ENCODE measurements at regions of chr11 and their contacts with region 1.

Region 1: GRCh38 chr11:2428322-2428795 is 16.0 kb downstream of the TRPM5 start:
- DNase-seq: peak; percentile 88
- H3K4me3 ChIP-seq: no peak overlapping the region
- H3K27ac ChIP-seq: no peak overlapping the region
- H3K4me1 ChIP-seq: peaks cover 0 to 5% (median 3%) of the 10 kb centered on the region in 4 donors
- H3K27me3 ChIP-seq: peaks cover 27% of the 10 kb centered on the region
- CTCF ChIP-seq: peak; percentile 81 to 99 (median 89)
- EP300 ChIP-seq: no peak
- POLR2A ChIP-seq: no peak

Region 2: DNA sequence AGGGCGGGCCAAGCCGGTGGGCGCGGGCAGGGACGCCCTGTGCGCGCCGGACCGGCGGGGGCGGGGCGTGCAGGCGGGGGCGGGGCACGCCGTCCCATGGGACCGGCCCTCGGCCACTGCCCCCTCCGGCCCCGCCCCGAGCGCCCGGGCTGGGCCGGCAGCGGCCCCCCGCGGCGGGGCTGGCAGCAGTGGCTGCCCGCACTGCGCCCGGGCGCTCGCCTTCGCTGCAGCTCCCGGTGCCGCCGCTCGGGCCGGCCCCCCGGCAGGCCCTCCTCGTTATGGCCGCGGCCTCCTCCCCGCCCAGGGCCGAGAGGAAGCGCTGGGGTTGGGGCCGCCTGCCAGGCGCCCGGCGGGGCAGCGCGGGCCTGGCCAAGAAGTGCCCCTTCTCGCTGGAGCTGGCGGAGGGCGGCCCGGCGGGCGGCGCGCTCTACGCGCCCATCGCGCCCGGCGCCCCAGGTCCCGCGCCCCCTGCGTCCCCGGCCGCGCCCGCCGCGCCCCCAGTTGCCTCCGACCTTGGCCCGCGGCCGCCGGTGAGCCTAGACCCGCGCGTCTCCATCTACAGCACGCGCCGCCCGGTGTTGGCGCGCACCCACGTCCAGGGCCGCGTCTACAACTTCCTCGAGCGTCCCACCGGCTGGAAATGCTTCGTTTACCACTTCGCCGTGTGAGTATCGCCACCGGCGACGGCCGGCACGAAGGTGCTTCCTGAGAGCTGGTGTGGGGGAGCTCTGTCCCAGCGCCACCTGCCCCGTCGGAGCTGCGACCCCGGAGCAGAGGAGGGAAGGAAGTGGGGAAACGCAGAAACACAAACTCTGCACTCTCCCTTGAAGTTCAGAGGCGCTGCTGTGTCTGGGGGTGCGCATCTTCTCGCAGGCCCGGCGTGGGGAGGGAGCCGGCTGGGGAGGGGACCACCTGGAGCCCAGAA is 16.7 kb after region 1 on chr11 and contains the start of gene KCNQ1:
- in situ Hi-C with region 1: no loop called
- intact Hi-C with region 1: no loop called
- DNase-seq: peak; percentile 87
- H3K4me3 ChIP-seq: peak within 1 kb of the TSS; percentile 13 to 53 (median 42)
- H3K27ac ChIP-seq: peak within 1 kb of the TSS; percentile 48 to 84 (median 65)
- H3K4me1 ChIP-seq: peaks cover 3 to 54% (median 44%) of the 10 kb centered on the region in 4 donors
- H3K27me3 ChIP-seq: peaks cover 16% of the 10 kb centered on the region
- CTCF ChIP-seq: no peak
- EP300 ChIP-seq: no peak
- POLR2A ChIP-seq: no peak
- total RNA-seq, gene KCNQ1: 5.6 to 46.8 (median 24.6) TPM

Region 3: GRCh38 chr11:2526808-2527381 is 98.5 kb after region 1 on chr11:
- in situ Hi-C with region 1: loop called (anchors 5 to 10 kb)
- intact Hi-C with region 1: loop called (anchors 5 kb)
- DNase-seq: peak; percentile 87
- H3K4me3 ChIP-seq: peak overlapping the region in 2 of 4 donors; percentile 9 to 33
- H3K27ac ChIP-seq: peak overlapping the region; percentile 74 to 80 (median 77)
- H3K4me1 ChIP-seq: peaks cover 11 to 26% (median 23%) of the 10 kb centered on the region in 4 donors
- H3K27me3 ChIP-seq: no peaks in the 10 kb centered on the region
- CTCF ChIP-seq: peak; percentile 20 to 72 (median 31)
- EP300 ChIP-seq: no peak
- POLR2A ChIP-seq: no peak

Region 4: DNA sequence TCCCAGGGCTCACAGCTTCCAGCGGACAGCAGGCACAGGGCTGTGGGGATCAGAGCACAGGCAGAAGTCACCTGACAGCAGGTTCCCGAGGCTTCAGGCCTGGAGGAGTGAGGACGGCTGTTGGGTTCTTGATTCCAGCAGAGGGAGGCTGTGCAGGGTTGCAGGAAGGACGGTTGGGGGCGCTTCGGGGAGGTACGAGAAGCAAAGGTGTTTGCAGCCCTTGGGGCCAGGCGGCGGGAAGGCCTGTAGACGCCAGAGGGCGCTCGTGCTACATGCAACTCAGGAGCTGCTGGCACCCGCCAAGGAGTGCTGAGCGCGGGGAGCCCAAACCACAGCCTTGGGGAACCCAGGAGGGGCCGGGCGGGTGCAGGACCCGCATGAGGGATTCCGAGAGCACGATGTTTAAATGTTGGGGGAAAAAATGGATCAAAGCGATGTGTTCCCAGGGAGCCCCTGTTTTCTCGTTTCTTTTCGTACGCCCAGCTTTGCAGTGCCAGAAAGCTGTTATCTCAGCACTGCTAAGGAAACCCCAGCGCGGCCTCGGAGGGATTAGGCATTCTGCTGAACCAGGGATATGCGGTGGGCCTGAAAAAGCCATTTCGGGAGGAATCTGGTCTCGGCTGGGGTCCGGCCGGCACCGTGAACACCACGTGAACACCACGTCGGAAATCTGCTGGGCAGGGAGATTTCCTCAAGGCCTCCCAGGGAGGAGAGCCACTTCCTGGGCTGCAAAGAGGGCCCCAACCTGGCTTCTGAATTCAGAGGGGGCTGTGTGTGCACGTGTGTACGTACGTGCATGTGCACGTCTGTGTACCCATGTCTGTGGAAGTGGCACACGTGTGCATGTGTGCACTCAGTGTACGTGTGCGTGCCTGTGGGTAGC is 104.6 kb after region 1 on chr11:
- in situ Hi-C with region 1: loop called (anchors 5 to 10 kb)
- intact Hi-C with region 1: loop called (anchors 5 kb)
- DNase-seq: peak; percentile 93
- H3K4me3 ChIP-seq: peak overlapping the region in 2 of 4 donors; percentile 9 to 12
- H3K27ac ChIP-seq: peak overlapping the region in 2 of 4 donors; percentile 8 to 37
- H3K4me1 ChIP-seq: peaks cover 5 to 22% (median 7%) of the 10 kb centered on the region in 4 donors
- H3K27me3 ChIP-seq: no peaks in the 10 kb centered on the region
- CTCF ChIP-seq: peak; percentile 99
- EP300 ChIP-seq: no peak
- POLR2A ChIP-seq: no peak

Region 5: GRCh38 chr11:2892215-2893020 is 464.1 kb after region 1 on chr11:
- in situ Hi-C with region 1: loop called (anchors 5 to 25 kb)
- intact Hi-C with region 1: loop called (anchors 10 kb)
- DNase-seq: peak; percentile 67
- H3K4me3 ChIP-seq: peak overlapping the region; percentile 11 to 45 (median 24)
- H3K27ac ChIP-seq: peak overlapping the region; percentile 18 to 59 (median 57)
- H3K4me1 ChIP-seq: peaks cover 21 to 32% (median 28%) of the 10 kb centered on the region in 4 donors
- H3K27me3 ChIP-seq: no peaks in the 10 kb centered on the region
- CTCF ChIP-seq: peak; percentile 85 to 96 (median 96)
- EP300 ChIP-seq: no peak
- POLR2A ChIP-seq: peak; percentile 14

Region 6: GRCh38 chr11:2898366-2899079 is 470.2 kb after region 1 on chr11:
- in situ Hi-C with region 1: loop called (anchors 5 to 25 kb)
- intact Hi-C with region 1: loop called (anchors 10 kb)
- DNase-seq: peak; percentile 63
- H3K4me3 ChIP-seq: no peak overlapping the region
- H3K27ac ChIP-seq: peak overlapping the region; percentile 55 to 74 (median 60)
- H3K4me1 ChIP-seq: peaks cover 0 to 39% (median 16%) of the 10 kb centered on the region in 4 donors
- H3K27me3 ChIP-seq: no peaks in the 10 kb centered on the region
- CTCF ChIP-seq: no peak
- EP300 ChIP-seq: no peak
- POLR2A ChIP-seq: no peak